CD14-positive monocyte (primary cell): ENCODE measurements at regions of chr19 and their contacts with region 1.

Region 1: GRCh38 chr19:34712395-34713261 is 21.4 kb upstream of the ZNF181 start:
- DNase-seq: peak; percentile 51 to 61 (median 57)
- H3K4me3 ChIP-seq: no peak overlapping the region
- H3K4me3 Mint-ChIP-seq: no peak overlapping the region
- H3K27ac ChIP-seq: no peak overlapping the region
- H3K27ac Mint-ChIP-seq: no peak overlapping the region
- H3K4me1 ChIP-seq: no peaks in the 10 kb centered on the region
- H3K4me1 Mint-ChIP-seq: no peaks in the 10 kb centered on the region
- H3K27me3 ChIP-seq: no peaks in the 10 kb centered on the region
- H3K27me3 Mint-ChIP-seq: peaks cover 0 to 11% (median 3%) of the 10 kb centered on the region in 3 donors
- CTCF ChIP-seq: peak; percentile 78

Region 2: GRCh38 chr19:34501339-34502320 is 211.0 kb before region 1 on chr19:
- intact Hi-C with region 1: loop called (anchors 5 kb)
- DNase-seq: peak; percentile 73 to 82 (median 81)
- H3K4me3 ChIP-seq: no peak overlapping the region
- H3K4me3 Mint-ChIP-seq: peak overlapping the region in 1 of 2 donors; percentile 71
- H3K27ac ChIP-seq: no peak overlapping the region
- H3K27ac Mint-ChIP-seq: no peak overlapping the region
- H3K4me1 ChIP-seq: peaks cover 0 to 10% of the 10 kb centered on the region in 2 donors
- H3K4me1 Mint-ChIP-seq: peaks cover 3% of the 10 kb centered on the region
- H3K27me3 ChIP-seq: peaks cover 0 to 26% of the 10 kb centered on the region in 2 donors
- H3K27me3 Mint-ChIP-seq: peaks cover 28 to 42% (median 33%) of the 10 kb centered on the region in 3 donors
- CTCF ChIP-seq: peak; percentile 98

Region 3: GRCh38 chr19:34639491-34640085 is 73.0 kb before region 1 on chr19:
- intact Hi-C with region 1: loop called (anchors 1 to 2 kb)
- DNase-seq: peak; percentile 40 to 70 (median 60)
- H3K4me3 ChIP-seq: no peak overlapping the region
- H3K4me3 Mint-ChIP-seq: no peak overlapping the region
- H3K27ac ChIP-seq: no peak overlapping the region
- H3K27ac Mint-ChIP-seq: no peak overlapping the region
- H3K4me1 ChIP-seq: no peaks in the 10 kb centered on the region
- H3K4me1 Mint-ChIP-seq: no peaks in the 10 kb centered on the region
- H3K27me3 ChIP-seq: no peaks in the 10 kb centered on the region
- H3K27me3 Mint-ChIP-seq: peaks cover 0 to 4% (median 1%) of the 10 kb centered on the region in 3 donors
- CTCF ChIP-seq: peak; percentile 84